Dorsolateral prefrontal cortex (tissue), 120 donors: ENCODE measurements at regions of chr11 and their contacts with region 1.

Region 1: GRCh38 chr11:112666253-112666652 is 295.0 kb upstream of the NCAM1 start:
- DNase-seq: no peak
- H3K4me3 ChIP-seq: no peak overlapping the region
- H3K27ac ChIP-seq: no peak overlapping the region
- H3K27me3 ChIP-seq: no peaks in the 10 kb centered on the region
- CTCF ChIP-seq: no peak

Region 2: DNA sequence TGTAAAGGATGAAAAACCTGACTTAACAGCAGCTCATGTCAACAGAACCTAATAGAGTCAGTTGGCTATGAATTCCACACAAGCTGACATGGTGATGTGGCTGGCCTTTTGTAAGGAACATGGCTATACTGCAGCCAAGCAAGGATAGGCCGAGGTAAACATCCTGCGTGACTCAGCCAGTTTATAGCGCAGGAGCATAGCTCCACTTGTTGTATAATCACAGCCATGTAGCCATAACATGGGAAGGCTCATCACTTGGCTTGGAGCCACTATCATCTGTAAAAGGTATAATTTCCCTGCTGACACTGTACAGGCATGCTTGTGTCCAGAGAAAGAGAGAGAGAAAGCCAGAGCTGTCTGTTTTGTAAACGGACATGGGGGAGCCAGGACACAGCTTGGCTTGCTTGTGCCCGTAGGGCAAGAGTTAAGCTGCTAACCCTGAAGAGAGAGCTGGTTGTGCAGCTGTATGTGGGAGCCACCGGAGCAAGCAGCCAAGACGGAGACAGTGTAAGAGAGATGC is 301.2 kb before region 1 on chr11:
- intact Hi-C with region 1: no loop called
- DNase-seq: no peak
- H3K4me3 ChIP-seq: no peak overlapping the region
- H3K27ac ChIP-seq: no peak overlapping the region
- H3K27me3 ChIP-seq: no peaks in the 10 kb centered on the region
- CTCF ChIP-seq: no peak

Region 3: DNA sequence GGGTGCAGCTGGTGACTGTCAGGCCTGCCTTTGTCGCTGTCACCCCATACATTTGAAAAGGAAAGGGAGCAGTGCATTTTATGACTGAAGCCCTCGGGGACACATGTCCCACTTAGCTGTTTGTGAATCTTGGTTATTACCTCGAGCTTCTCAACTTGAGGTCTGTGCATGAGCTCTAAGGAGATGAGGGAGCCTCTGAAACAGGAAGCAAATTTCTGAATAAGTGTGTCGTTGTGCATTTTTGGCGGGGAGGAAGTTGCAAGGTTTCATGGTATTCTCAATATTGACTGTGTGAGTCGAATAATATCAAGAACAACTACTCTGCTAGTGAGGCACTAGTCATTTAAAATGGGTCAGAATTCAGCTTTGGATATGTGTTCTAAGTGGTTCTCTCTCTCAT is 255.9 kb before region 1 on chr11:
- intact Hi-C with region 1: no loop called
- DNase-seq: no peak
- H3K4me3 ChIP-seq: no peak overlapping the region
- H3K27ac ChIP-seq: no peak overlapping the region
- H3K27me3 ChIP-seq: peaks cover 0 to 6% (median 0%) of the 10 kb centered on the region in 45 donors
- CTCF ChIP-seq: no peak

Region 4: DNA sequence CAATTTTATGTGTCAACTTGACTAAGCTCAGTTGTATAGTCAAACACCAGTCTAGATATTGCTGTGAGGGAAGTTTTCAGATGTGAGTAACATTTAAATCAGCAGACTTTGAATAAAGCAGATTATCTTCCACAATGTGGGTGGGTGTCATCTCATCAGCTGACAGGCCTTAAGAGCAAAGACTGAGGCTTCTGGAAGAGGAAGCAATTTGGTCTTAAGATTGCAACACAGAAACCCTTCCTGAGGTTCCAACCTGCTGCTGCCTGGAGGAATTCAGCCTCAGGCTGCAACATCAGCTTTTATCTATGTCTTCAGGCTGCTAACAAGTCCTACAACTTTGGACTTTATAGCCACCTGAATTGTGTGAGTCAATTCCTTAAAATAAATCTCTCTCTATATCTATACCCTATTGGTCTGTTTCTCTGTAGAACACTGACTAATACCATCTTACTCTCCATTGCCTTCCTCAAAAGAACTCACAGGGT is 128.4 kb before region 1 on chr11:
- intact Hi-C with region 1: no loop called
- DNase-seq: no peak
- H3K4me3 ChIP-seq: no peak overlapping the region
- H3K27ac ChIP-seq: no peak overlapping the region
- H3K27me3 ChIP-seq: no peaks in the 10 kb centered on the region
- CTCF ChIP-seq: no peak

Region 5: GRCh38 chr11:112693781-112694180 is 27.5 kb after region 1 on chr11:
- intact Hi-C with region 1: loop called in 1 of 2 experiments (anchors 2 kb)
- DNase-seq: no peak
- H3K4me3 ChIP-seq: no peak overlapping the region
- H3K27ac ChIP-seq: no peak overlapping the region
- H3K27me3 ChIP-seq: peaks cover 0 to 3% (median 0%) of the 10 kb centered on the region in 45 donors
- CTCF ChIP-seq: no peak

Region 6: GRCh38 chr11:112748713-112749543 is 82.7 kb after region 1 on chr11:
- intact Hi-C with region 1: no loop called
- DNase-seq: peak; percentile 8 to 83 (median 61)
- H3K4me3 ChIP-seq: no peak overlapping the region
- H3K27ac ChIP-seq: peak overlapping the region in 39 of 59 donors; percentile 2 to 77 (median 49)
- H3K27me3 ChIP-seq: no peaks in the 10 kb centered on the region
- CTCF ChIP-seq: no peak